Activated T-helper 2 cell treated with anti-CD3 and anti-CD28 coated beads, Interferon-gamma antibody, Interleukin-2, Interleukin-4, amounts not matched to agents 10 μg/mL and 5 μg/mL and 100 μg/mL, durations not matched to agents 14 hours and 24 hours and 36 hours (primary cell): ENCODE measurements at regions of chr5 and their contacts with region 1.

Region 1: DNA sequence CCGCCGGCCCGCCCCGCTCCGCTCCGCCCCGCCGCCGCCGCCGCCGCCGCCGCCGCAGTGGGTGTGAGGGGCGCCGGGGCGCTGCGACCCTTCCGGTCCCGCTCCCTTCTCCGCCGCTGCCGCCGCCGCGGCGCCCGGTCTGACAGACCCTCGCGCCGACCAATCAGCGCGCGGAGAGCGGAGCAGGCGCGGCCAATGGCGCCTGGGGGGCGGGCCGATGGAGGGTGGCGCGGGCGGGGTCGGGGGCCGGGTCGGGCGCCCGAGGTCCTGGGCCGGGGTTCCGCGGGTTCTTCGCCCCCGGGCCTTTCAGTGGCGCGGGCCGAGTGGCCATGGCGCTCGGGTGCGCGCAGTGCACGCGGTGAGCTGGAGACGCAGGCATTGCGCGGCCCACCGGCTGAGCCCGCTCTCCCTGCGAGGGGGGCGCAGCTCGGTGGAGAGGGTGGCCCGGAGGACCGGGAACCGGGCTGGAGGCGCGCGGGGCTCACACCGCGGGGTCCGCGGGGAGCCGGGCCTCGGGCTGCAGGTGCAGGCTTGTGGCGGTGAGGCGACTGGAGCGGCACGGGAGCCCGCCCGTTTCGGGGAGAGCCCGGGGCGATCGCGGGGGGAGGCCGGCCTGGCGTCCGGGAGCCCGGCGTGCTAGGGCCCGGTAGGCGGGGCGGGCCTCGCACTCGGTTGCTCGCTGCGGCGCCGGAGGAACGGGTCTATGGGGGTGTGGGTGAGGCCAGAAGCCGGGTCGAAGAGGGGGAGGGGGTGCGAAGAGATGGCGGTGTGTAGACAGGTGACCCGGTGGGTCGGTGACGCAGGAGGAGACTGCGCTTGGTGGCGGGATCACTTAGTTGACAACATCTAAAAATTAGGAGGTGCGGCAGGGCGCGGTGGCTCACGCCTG is at the start of gene MAPK9:
- DNase-seq: peak; percentile 80
- H3K4me3 Mint-ChIP-seq: peak within 1 kb of the TSS; percentile 86
- H3K27ac Mint-ChIP-seq: peak within 1 kb of the TSS; percentile 83
- H3K4me1 Mint-ChIP-seq: peaks cover 29% of the 10 kb centered on the region
- H3K27me3 Mint-ChIP-seq: no peaks in the 10 kb centered on the region
- total RNA-seq, gene MAPK9: 43.1 and 44.3 TPM in 2 replicates

Region 2: GRCh38 chr5:178626484-178627258 is 1665.5 kb before region 1 on chr5 and contains the start of gene CLK4:
- intact Hi-C with region 1: loop called (anchors 10 kb)
- DNase-seq: peak; percentile 94
- H3K4me3 Mint-ChIP-seq: peak within 1 kb of the TSS; percentile 97
- H3K27ac Mint-ChIP-seq: peak within 1 kb of the TSS; percentile 98
- H3K4me1 Mint-ChIP-seq: peaks cover 19% of the 10 kb centered on the region
- H3K27me3 Mint-ChIP-seq: peaks cover 6% of the 10 kb centered on the region
- total RNA-seq, gene CLK4: 21.9 and 23.6 TPM in 2 replicates

Region 3: GRCh38 chr5:179530069-179530998 is 761.9 kb before region 1 on chr5:
- intact Hi-C with region 1: no loop called
- DNase-seq: peak; percentile 51
- H3K4me3 Mint-ChIP-seq: peak overlapping the region; percentile 37
- H3K27ac Mint-ChIP-seq: no peak overlapping the region
- H3K4me1 Mint-ChIP-seq: peaks cover 11% of the 10 kb centered on the region
- H3K27me3 Mint-ChIP-seq: peaks cover 4% of the 10 kb centered on the region

Region 4: GRCh38 chr5:180259260-180259681 is 32.9 kb before region 1 on chr5:
- intact Hi-C with region 1: no loop called
- DNase-seq: no peak
- H3K4me3 Mint-ChIP-seq: no peak overlapping the region
- H3K27ac Mint-ChIP-seq: no peak overlapping the region
- H3K4me1 Mint-ChIP-seq: no peaks in the 10 kb centered on the region
- H3K27me3 Mint-ChIP-seq: no peaks in the 10 kb centered on the region

Region 5: DNA sequence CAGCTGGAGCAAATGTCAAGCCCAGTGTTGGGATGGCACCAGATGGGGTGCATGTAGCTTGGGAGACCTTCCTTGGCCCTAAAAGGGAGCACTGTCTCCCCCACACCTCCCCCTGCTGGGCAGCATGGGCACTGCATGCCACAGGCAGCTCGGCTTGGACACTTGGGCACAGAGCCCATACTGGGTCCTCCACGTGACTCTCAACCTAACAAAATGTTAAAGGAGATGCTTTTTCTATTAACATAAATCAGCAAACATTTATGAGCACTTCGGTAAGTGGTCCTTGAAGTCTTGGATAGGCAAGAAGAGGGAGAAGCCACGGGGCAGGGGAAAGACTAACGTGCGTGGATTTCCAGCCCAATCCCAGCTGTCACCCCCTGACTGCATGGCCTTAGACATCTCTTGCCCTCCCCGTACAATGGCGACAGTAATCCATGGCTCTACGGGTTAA is 23.6 kb after region 1 on chr5:
- intact Hi-C with region 1: loop called (anchors 1 kb)
- DNase-seq: peak; percentile 42
- H3K4me3 Mint-ChIP-seq: no peak overlapping the region
- H3K27ac Mint-ChIP-seq: no peak overlapping the region
- H3K4me1 Mint-ChIP-seq: no peaks in the 10 kb centered on the region
- H3K27me3 Mint-ChIP-seq: no peaks in the 10 kb centered on the region

Region 6: DNA sequence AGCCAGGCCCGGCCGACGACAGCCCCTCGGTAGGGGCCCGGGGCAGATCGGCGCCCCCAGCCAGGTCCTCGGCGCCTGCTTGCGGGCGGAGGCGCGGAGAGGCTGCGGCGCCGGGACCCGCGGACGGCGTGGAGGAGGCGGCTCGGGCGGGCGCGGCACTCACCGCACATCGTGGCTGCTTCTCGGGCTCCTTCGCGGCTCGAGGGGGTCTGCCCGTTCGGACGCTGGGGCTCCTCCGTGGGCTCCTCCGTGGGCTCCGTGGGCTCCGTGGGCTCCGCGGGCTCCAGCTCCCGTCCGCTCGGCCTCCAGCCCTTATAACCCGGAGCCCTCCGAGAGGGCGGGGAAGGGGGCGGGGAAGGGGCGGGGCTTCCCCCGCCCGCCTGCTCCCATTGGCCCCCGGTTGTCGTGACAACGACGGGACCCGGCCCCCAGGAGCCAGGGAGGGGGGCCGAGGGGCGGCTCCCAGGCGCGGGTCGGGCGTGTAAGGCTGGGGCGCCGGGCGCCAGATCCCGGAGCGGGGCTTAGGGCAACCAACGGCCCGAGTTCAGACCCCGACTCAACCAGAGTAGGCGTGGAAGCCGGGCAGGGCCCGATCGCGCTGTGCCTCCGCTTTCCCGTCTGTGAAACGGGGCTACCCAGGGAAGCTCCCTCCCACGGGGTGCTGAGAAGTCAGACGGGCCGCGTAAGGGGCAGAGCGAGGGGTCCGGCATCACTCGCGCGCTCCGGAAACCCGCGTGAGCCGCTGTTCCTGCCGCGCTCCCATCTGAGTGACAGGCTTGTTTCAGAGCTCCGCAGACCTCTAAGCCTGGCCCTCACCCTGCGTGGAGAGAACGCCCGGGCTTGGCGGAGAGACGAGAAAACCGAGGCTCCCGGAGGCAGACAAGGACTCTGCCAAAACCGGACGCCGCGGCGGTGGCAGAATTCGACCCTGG is 61.1 kb after region 1 on chr5 and contains the start of gene GFPT2:
- intact Hi-C with region 1: loop called (anchors 1 kb)
- DNase-seq: peak; percentile 52
- H3K4me3 Mint-ChIP-seq: peak within 1 kb of the TSS; percentile 65
- H3K27ac Mint-ChIP-seq: no peak within 1 kb of the TSS
- H3K4me1 Mint-ChIP-seq: no peaks in the 10 kb centered on the region
- H3K27me3 Mint-ChIP-seq: peaks cover 54% of the 10 kb centered on the region
- total RNA-seq, gene GFPT2: 0.37 TPM in 1 of 2 replicates, not detected in the other

Region 7: GRCh38 chr5:180494060-180494509 is 201.9 kb after region 1 on chr5 and contains the start of gene CNOT6:
- intact Hi-C with region 1: loop called (anchors 10 kb)
- DNase-seq: peak; percentile 92
- H3K4me3 Mint-ChIP-seq: peak within 1 kb of the TSS; percentile 94
- H3K27ac Mint-ChIP-seq: peak within 1 kb of the TSS; percentile 90
- H3K4me1 Mint-ChIP-seq: peaks cover 24% of the 10 kb centered on the region
- H3K27me3 Mint-ChIP-seq: no peaks in the 10 kb centered on the region
- total RNA-seq, gene CNOT6: 43.2 and 48.9 TPM in 2 replicates